ENCODE measurements at regions of chr7 and their contacts with region 1.

Region 1: DNA sequence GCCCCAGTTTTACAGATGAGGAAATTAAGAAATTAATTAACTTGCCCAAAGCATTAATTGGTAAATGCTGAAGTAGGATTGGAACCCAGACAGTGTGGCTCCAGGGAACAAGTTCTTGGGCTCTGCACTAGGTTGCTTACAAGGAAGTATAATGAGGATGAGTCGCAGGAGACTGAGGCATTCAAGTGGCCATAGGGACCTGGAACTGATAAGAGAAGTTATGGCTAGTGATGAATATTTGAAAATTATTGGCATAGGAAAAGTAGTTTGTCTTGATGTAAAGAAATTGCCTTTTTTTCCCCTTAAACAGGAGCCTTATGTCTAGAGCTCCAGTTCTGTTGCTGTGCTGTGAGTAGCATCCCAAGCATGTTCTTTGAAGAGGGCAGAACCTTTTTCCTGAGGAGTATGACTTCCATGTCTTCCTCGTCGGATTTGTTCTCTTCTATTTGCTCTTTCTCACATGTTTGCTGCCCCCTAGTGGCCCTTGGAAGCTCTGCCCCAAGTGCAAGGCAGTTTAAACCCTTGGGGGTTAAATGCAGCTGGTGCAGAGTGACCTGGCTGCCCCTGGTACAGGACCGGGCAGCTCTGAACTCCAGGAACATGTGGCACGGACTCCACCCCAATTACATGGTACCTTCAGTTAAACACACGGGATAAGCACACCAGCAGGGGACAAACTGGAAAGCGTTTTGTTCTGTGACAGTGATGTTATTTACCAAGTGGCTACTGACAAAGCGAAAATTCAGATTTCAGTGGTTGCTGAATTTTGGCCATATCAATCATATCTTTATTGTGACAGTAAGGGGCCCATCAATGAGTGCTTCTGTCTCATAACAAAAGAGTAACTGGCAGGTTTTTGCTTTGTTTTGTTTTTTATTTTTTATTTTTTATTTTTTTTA is 148.8 kb downstream of the HECW1 start:
- DNase-seq: peak in 8 of 9 experiments; percentile 35 to 71 (median 57)
- ATAC-seq: no peak
- H3K4me3 ChIP-seq: no peak overlapping the region
- H3K4me3 Mint-ChIP-seq: no peak overlapping the region
- H3K27ac ChIP-seq: no peak overlapping the region
- H3K27ac Mint-ChIP-seq: no peak overlapping the region
- H3K4me1 ChIP-seq: no peaks in the 10 kb centered on the region
- H3K4me1 Mint-ChIP-seq: no peaks in the 10 kb centered on the region
- H3K27me3 ChIP-seq: peaks cover 0 to 2% of the 10 kb centered on the region in 2 experiments
- H3K27me3 Mint-ChIP-seq: peaks cover 26% of the 10 kb centered on the region
- CTCF ChIP-seq: peak; percentile 83

Region 2: DNA sequence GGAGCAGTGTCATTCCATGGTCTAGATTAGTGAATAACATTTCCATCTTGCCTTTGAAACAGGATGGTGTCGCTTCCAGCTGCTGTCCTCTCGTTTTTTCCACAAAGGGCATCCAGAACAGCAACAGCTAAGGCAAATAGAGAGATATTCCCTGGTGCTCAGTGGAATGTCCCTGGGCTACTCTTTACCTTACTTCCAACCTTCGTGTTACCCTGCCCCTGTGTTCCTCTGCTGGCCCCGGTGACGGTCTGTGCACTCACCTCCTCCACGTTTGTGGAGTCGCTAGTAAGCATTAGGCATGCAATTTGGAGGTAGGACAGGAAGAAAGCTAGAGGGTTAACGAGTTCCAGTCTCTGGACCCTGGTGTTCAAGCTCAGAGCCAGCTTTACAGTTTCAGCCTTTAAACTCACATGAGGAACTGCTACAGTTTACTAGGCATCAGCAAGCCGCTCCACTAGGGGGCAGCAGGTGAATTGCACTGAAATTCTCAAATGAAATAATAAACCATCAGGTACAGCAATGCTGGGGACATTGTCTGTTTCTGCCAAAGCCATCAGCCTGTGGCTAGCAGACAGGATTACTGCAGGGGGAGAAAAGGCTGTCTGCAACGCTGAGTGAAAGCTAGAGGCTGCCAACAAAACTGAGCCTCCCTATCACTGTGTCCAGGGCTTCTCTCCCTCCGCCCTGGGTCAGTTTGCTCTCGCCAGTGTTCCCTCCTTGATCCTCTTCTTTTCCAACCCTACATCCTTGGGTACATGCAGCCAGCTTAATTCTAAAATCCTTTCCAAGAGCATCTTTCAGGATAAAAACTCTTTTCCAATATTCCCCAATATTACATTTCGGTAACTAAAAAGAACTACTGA is 320.0 kb before region 1 on chr7:
- CTCF ChIA-PET with region 1: no interaction called
- POLR2A ChIA-PET with region 1: no interaction called
- intact Hi-C with region 1: loop called in 1 of 2 experiments (anchors 5 kb)
- DNase-seq: peak; percentile 53 to 80 (median 71)
- ATAC-seq: peak; percentile 80
- H3K4me3 ChIP-seq: no peak overlapping the region
- H3K4me3 Mint-ChIP-seq: no peak overlapping the region
- H3K27ac ChIP-seq: no peak overlapping the region
- H3K27ac Mint-ChIP-seq: no peak overlapping the region
- H3K4me1 ChIP-seq: no peaks in the 10 kb centered on the region
- H3K4me1 Mint-ChIP-seq: peaks cover under 1% of the 10 kb centered on the region
- H3K27me3 ChIP-seq: no peaks in the 10 kb centered on the region
- H3K27me3 Mint-ChIP-seq: no peaks in the 10 kb centered on the region
- CTCF ChIP-seq: peak; percentile 90

Region 3: GRCh38 chr7:43248961-43249822 is 12.0 kb before region 1 on chr7:
- CTCF ChIA-PET with region 1: interaction called, 11 read pairs
- POLR2A ChIA-PET with region 1: no interaction called
- intact Hi-C with region 1: no loop called
- DNase-seq: no peak
- ATAC-seq: no peak
- H3K4me3 ChIP-seq: no peak overlapping the region
- H3K4me3 Mint-ChIP-seq: no peak overlapping the region
- H3K27ac ChIP-seq: no peak overlapping the region
- H3K27ac Mint-ChIP-seq: no peak overlapping the region
- H3K4me1 ChIP-seq: no peaks in the 10 kb centered on the region
- H3K4me1 Mint-ChIP-seq: no peaks in the 10 kb centered on the region
- H3K27me3 ChIP-seq: peaks cover 0 to 5% of the 10 kb centered on the region in 2 experiments
- H3K27me3 Mint-ChIP-seq: peaks cover 14% of the 10 kb centered on the region
- CTCF ChIP-seq: no peak

Region 4: GRCh38 chr7:43276547-43276946 is 15.3 kb after region 1 on chr7:
- CTCF ChIA-PET with region 1: interaction called, 10 read pairs
- POLR2A ChIA-PET with region 1: no interaction called
- intact Hi-C with region 1: no loop called
- DNase-seq: no peak
- ATAC-seq: no peak
- H3K4me3 ChIP-seq: no peak overlapping the region
- H3K4me3 Mint-ChIP-seq: no peak overlapping the region
- H3K27ac ChIP-seq: no peak overlapping the region
- H3K27ac Mint-ChIP-seq: no peak overlapping the region
- H3K4me1 ChIP-seq: no peaks in the 10 kb centered on the region
- H3K4me1 Mint-ChIP-seq: no peaks in the 10 kb centered on the region
- H3K27me3 ChIP-seq: no peaks in the 10 kb centered on the region
- H3K27me3 Mint-ChIP-seq: peaks cover 24% of the 10 kb centered on the region
- CTCF ChIP-seq: no peak

Region 5: GRCh38 chr7:43721193-43721806 is 460.1 kb after region 1 on chr7:
- CTCF ChIA-PET with region 1: interaction called, 3 read pairs
- POLR2A ChIA-PET with region 1: no interaction called
- intact Hi-C with region 1: loop called (anchors 1 to 5 kb)
- DNase-seq: peak in 3 of 9 experiments; percentile 22 to 76 (median 69)
- ATAC-seq: peak; percentile 31
- H3K4me3 ChIP-seq: no peak overlapping the region
- H3K4me3 Mint-ChIP-seq: no peak overlapping the region
- H3K27ac ChIP-seq: no peak overlapping the region
- H3K27ac Mint-ChIP-seq: no peak overlapping the region
- H3K4me1 ChIP-seq: no peaks in the 10 kb centered on the region
- H3K4me1 Mint-ChIP-seq: peaks cover 54% of the 10 kb centered on the region
- H3K27me3 ChIP-seq: no peaks in the 10 kb centered on the region
- H3K27me3 Mint-ChIP-seq: no peaks in the 10 kb centered on the region
- CTCF ChIP-seq: peak; percentile 95